ENCODE measurements at regions of chr11 and their contacts with region 1.

Region 1: GRCh38 chr11:66288671-66289547 is at the start of gene YIF1A:
- DNase-seq: peak; percentile 98 to 100 (median 99)
- H3K4me3 ChIP-seq: peak within 1 kb of the TSS; percentile 70 to 84
- H3K4me3 Mint-ChIP-seq: peak within 1 kb of the TSS; percentile 87 to 96 (median 92)
- H3K27ac ChIP-seq: peak within 1 kb of the TSS; percentile 88
- H3K27ac Mint-ChIP-seq: peak within 1 kb of the TSS; percentile 83 to 98 (median 96)
- H3K4me1 ChIP-seq: peaks cover 39% of the 10 kb centered on the region
- H3K4me1 Mint-ChIP-seq: peaks cover 16 to 49% (median 29%) of the 10 kb centered on the region in 4 donors
- H3K27me3 ChIP-seq: no peaks in the 10 kb centered on the region
- H3K27me3 Mint-ChIP-seq: peaks cover 10 to 14% of the 10 kb centered on the region in 2 donors
- total RNA-seq, gene YIF1A: 40.4 to 45.1 TPM

Region 2: DNA sequence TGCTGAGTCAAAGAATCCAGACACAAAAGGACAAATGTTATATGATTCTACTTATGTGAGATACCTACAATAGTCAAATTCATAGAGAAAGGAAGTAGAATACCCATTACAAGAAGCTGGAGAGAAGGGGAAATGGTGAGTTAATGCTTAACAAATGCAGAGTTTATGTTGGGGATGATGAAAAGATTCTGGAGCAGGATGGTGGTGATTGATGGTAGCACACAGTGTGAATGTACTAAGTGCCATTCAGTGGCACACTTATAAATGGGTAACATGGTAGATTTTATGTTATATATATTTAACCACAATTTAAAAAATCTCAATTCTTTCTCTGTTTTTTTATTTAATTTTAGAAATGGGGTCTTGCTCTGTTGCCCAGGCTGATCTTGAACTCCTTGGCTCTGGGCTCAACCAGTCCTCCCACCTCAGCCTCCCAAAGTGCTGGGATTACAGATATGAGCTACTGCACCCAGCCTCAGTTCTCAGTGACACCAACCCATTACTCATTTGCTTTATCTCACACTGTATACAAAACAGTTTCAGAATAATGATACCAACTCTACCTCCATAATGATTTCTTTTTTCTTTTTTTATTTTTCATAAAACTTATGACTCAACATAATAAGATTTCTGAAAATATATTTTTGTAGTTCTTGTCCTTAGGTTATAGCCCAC is 616.6 kb before region 1 on chr11:
- CTCF ChIA-PET with region 1: no interaction called
- POLR2A ChIA-PET with region 1: no interaction called
- intact Hi-C with region 1: no loop called
- DNase-seq: no peak
- H3K4me3 ChIP-seq: no peak overlapping the region
- H3K4me3 Mint-ChIP-seq: no peak overlapping the region
- H3K27ac ChIP-seq: no peak overlapping the region
- H3K27ac Mint-ChIP-seq: peak overlapping the region in 2 of 7 donors; percentile 2 to 37
- H3K4me1 ChIP-seq: no peaks in the 10 kb centered on the region
- H3K4me1 Mint-ChIP-seq: no peaks in the 10 kb centered on the region
- H3K27me3 ChIP-seq: no peaks in the 10 kb centered on the region
- H3K27me3 Mint-ChIP-seq: no peaks in the 10 kb centered on the region

Region 3: GRCh38 chr11:66222358-66223149 is 66.4 kb before region 1 on chr11:
- CTCF ChIA-PET with region 1: interaction called, 15 read pairs
- POLR2A ChIA-PET with region 1: interaction called, 4 read pairs
- intact Hi-C with region 1: no loop called
- DNase-seq: peak; percentile 92 to 97 (median 94)
- H3K4me3 ChIP-seq: no peak overlapping the region
- H3K4me3 Mint-ChIP-seq: peak overlapping the region in 3 of 8 donors; percentile 4 to 30 (median 27)
- H3K27ac ChIP-seq: peak overlapping the region; percentile 89
- H3K27ac Mint-ChIP-seq: peak overlapping the region; percentile 92 to 99 (median 98)
- H3K4me1 ChIP-seq: peaks cover 11% of the 10 kb centered on the region
- H3K4me1 Mint-ChIP-seq: peaks cover 11 to 22% (median 13%) of the 10 kb centered on the region in 4 donors
- H3K27me3 ChIP-seq: no peaks in the 10 kb centered on the region
- H3K27me3 Mint-ChIP-seq: no peaks in the 10 kb centered on the region

Region 4: GRCh38 chr11:66268283-66268951 is 20.5 kb before region 1 on chr11 and contains the start of gene RAB1B:
- CTCF ChIA-PET with region 1: interaction called, 9 read pairs
- POLR2A ChIA-PET with region 1: interaction called, 167 read pairs
- intact Hi-C with region 1: loop called (anchors 1 kb)
- DNase-seq: peak; percentile 99 to 100 (median 100)
- H3K4me3 ChIP-seq: peak within 1 kb of the TSS; percentile 62 to 84
- H3K4me3 Mint-ChIP-seq: peak within 1 kb of the TSS; percentile 92 to 99 (median 94)
- H3K27ac ChIP-seq: peak within 1 kb of the TSS; percentile 88
- H3K27ac Mint-ChIP-seq: peak within 1 kb of the TSS; percentile 94 to 100 (median 98)
- H3K4me1 ChIP-seq: peaks cover 48% of the 10 kb centered on the region
- H3K4me1 Mint-ChIP-seq: peaks cover 23 to 57% (median 39%) of the 10 kb centered on the region in 4 donors
- H3K27me3 ChIP-seq: no peaks in the 10 kb centered on the region
- H3K27me3 Mint-ChIP-seq: no peaks in the 10 kb centered on the region
- total RNA-seq, gene RAB1B: 76.4 to 79.4 TPM

Region 5: GRCh38 chr11:66277471-66278362 is 11.2 kb before region 1 on chr11 and contains the start of gene CNIH2:
- CTCF ChIA-PET with region 1: interaction called, 3 read pairs
- POLR2A ChIA-PET with region 1: interaction called, 167 read pairs
- intact Hi-C with region 1: no loop called
- DNase-seq: peak; percentile 46 to 65 (median 58)
- H3K4me3 ChIP-seq: no peak within 1 kb of the TSS
- H3K4me3 Mint-ChIP-seq: peak within 1 kb of the TSS in 7 of 8 donors; percentile 38 to 79 (median 66)
- H3K27ac ChIP-seq: peak within 1 kb of the TSS; percentile 48
- H3K27ac Mint-ChIP-seq: peak within 1 kb of the TSS; percentile 32 to 88 (median 85)
- H3K4me1 ChIP-seq: peaks cover 25% of the 10 kb centered on the region
- H3K4me1 Mint-ChIP-seq: peaks cover 11 to 57% (median 23%) of the 10 kb centered on the region in 4 donors
- H3K27me3 ChIP-seq: no peaks in the 10 kb centered on the region
- H3K27me3 Mint-ChIP-seq: peaks cover 0 to 1% of the 10 kb centered on the region in 2 donors
- total RNA-seq, gene CNIH2: 1.4 to 1.8 TPM

Region 6: GRCh38 chr11:66344550-66345315 is 55.8 kb after region 1 on chr11 and contains the start of gene BRMS1:
- CTCF ChIA-PET with region 1: no interaction called
- POLR2A ChIA-PET with region 1: interaction called, 14 read pairs
- intact Hi-C with region 1: no loop called
- DNase-seq: peak; percentile 92 to 99 (median 93)
- H3K4me3 ChIP-seq: peak within 1 kb of the TSS; percentile 79 to 99
- H3K4me3 Mint-ChIP-seq: peak within 1 kb of the TSS; percentile 90 to 99 (median 97)
- H3K27ac ChIP-seq: peak within 1 kb of the TSS; percentile 84
- H3K27ac Mint-ChIP-seq: peak within 1 kb of the TSS; percentile 95 to 99 (median 98)
- H3K4me1 ChIP-seq: peaks cover 45% of the 10 kb centered on the region
- H3K4me1 Mint-ChIP-seq: peaks cover 31 to 62% (median 41%) of the 10 kb centered on the region in 4 donors
- H3K27me3 ChIP-seq: no peaks in the 10 kb centered on the region
- H3K27me3 Mint-ChIP-seq: peaks cover 1 to 4% of the 10 kb centered on the region in 2 donors
- total RNA-seq, gene BRMS1: 49.8 to 50.8 TPM

Region 7: GRCh38 chr11:66421492-66422205 is 132.7 kb after region 1 on chr11:
- CTCF ChIA-PET with region 1: no interaction called
- POLR2A ChIA-PET with region 1: interaction called, 7 read pairs
- intact Hi-C with region 1: loop called (anchors 1 kb)
- DNase-seq: peak; percentile 83 to 90 (median 85)
- H3K4me3 ChIP-seq: no peak overlapping the region
- H3K4me3 Mint-ChIP-seq: peak overlapping the region in 4 of 8 donors; percentile 30 to 64 (median 35)
- H3K27ac ChIP-seq: no peak overlapping the region
- H3K27ac Mint-ChIP-seq: peak overlapping the region in 4 of 7 donors; percentile 79 to 91 (median 88)
- H3K4me1 ChIP-seq: no peaks in the 10 kb centered on the region
- H3K4me1 Mint-ChIP-seq: peaks cover 6 to 23% (median 11%) of the 10 kb centered on the region in 4 donors
- H3K27me3 ChIP-seq: peaks cover 23% of the 10 kb centered on the region
- H3K27me3 Mint-ChIP-seq: peaks cover 23 to 28% of the 10 kb centered on the region in 2 donors

Region 8: GRCh38 chr11:66545701-66546367 is 256.9 kb after region 1 on chr11 and contains the start of gene ZDHHC24:
- CTCF ChIA-PET with region 1: no interaction called
- POLR2A ChIA-PET with region 1: no interaction called
- intact Hi-C with region 1: no loop called
- DNase-seq: peak; percentile 79 to 86 (median 82)
- H3K4me3 ChIP-seq: peak within 1 kb of the TSS; percentile 82 to 84
- H3K4me3 Mint-ChIP-seq: peak within 1 kb of the TSS; percentile 85 to 96 (median 92)
- H3K27ac ChIP-seq: peak within 1 kb of the TSS; percentile 82
- H3K27ac Mint-ChIP-seq: peak within 1 kb of the TSS; percentile 67 to 98 (median 92)
- H3K4me1 ChIP-seq: peaks cover 35% of the 10 kb centered on the region
- H3K4me1 Mint-ChIP-seq: peaks cover 22 to 59% (median 34%) of the 10 kb centered on the region in 4 donors
- H3K27me3 ChIP-seq: no peaks in the 10 kb centered on the region
- H3K27me3 Mint-ChIP-seq: no peaks in the 10 kb centered on the region
- total RNA-seq, gene ZDHHC24: 24.5 to 27.2 TPM

Measured in CD4-positive, alpha-beta memory T cell (primary cell).